Activated CD8-positive, alpha-beta memory T cell treated with anti-CD3 and anti-CD28 coated beads, Interleukin-2, amount 10 ng/mL, durations not matched to agents 7 days and 5 days (primary cell): ENCODE measurements at regions of chr1 and their contacts with region 1.

Region 1: GRCh38 chr1:26500488-26501175 is 28.4 kb downstream of the HMGN2 start:
- DNase-seq: peak; percentile 93
- ATAC-seq: peak; percentile 77
- H3K4me3 Mint-ChIP-seq: peak overlapping the region; percentile 80
- H3K27ac Mint-ChIP-seq: peak overlapping the region; percentile 95
- H3K4me1 Mint-ChIP-seq: peaks cover 17% of the 10 kb centered on the region
- H3K27me3 Mint-ChIP-seq: no peaks in the 10 kb centered on the region

Region 2: GRCh38 chr1:26472901-26473845 is 27.5 kb before region 1 on chr1:
- CTCF ChIA-PET with region 1: interaction called, 35 read pairs
- DNase-seq: peak; percentile 97
- ATAC-seq: peak; percentile 74
- H3K4me3 Mint-ChIP-seq: peak overlapping the region; percentile 86
- H3K27ac Mint-ChIP-seq: peak overlapping the region; percentile 61
- H3K4me1 Mint-ChIP-seq: peaks cover 45% of the 10 kb centered on the region
- H3K27me3 Mint-ChIP-seq: no peaks in the 10 kb centered on the region

Region 3: DNA sequence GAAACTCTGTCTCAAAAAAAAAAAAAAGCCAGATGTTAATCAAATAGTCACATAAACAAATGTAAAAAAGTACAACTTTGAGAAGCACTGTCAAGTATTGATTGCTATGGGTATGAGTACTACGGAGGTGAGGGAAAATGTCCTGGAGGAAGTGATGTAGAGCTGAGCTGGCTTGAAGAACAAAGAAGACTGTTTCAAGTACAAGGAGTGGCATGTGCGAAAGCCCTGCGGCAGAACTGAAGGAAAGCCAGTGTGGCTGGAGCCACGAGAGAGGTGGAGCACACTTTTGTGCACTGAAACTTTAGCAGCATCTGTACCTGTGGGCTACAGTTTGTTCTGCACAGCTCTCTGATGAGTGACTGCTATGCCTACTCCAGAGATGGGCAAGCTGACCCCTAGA is 23.5 kb after region 1 on chr1:
- CTCF ChIA-PET with region 1: interaction called, 14 read pairs
- DNase-seq: no peak
- ATAC-seq: no peak
- H3K4me3 Mint-ChIP-seq: no peak overlapping the region
- H3K27ac Mint-ChIP-seq: no peak overlapping the region
- H3K4me1 Mint-ChIP-seq: peaks cover 4% of the 10 kb centered on the region
- H3K27me3 Mint-ChIP-seq: peaks cover 29% of the 10 kb centered on the region

Region 4: GRCh38 chr1:26541816-26542711 is 41.4 kb after region 1 on chr1:
- CTCF ChIA-PET with region 1: interaction called, 82 read pairs
- DNase-seq: peak; percentile 95
- ATAC-seq: peak; percentile 73
- H3K4me3 Mint-ChIP-seq: peak overlapping the region; percentile 73
- H3K27ac Mint-ChIP-seq: peak overlapping the region; percentile 97
- H3K4me1 Mint-ChIP-seq: peaks cover 85% of the 10 kb centered on the region
- H3K27me3 Mint-ChIP-seq: no peaks in the 10 kb centered on the region

Region 5: GRCh38 chr1:26555550-26556510 is 55.2 kb after region 1 on chr1:
- CTCF ChIA-PET with region 1: interaction called, 15 read pairs
- DNase-seq: no peak
- ATAC-seq: no peak
- H3K4me3 Mint-ChIP-seq: no peak overlapping the region
- H3K27ac Mint-ChIP-seq: no peak overlapping the region
- H3K4me1 Mint-ChIP-seq: peaks cover 29% of the 10 kb centered on the region
- H3K27me3 Mint-ChIP-seq: no peaks in the 10 kb centered on the region

Region 6: GRCh38 chr1:26754086-26754874 is 253.6 kb after region 1 on chr1:
- CTCF ChIA-PET with region 1: no interaction called
- DNase-seq: no peak
- ATAC-seq: no peak
- H3K4me3 Mint-ChIP-seq: no peak overlapping the region
- H3K27ac Mint-ChIP-seq: no peak overlapping the region
- H3K4me1 Mint-ChIP-seq: peaks cover 32% of the 10 kb centered on the region
- H3K27me3 Mint-ChIP-seq: no peaks in the 10 kb centered on the region

Region 7: DNA sequence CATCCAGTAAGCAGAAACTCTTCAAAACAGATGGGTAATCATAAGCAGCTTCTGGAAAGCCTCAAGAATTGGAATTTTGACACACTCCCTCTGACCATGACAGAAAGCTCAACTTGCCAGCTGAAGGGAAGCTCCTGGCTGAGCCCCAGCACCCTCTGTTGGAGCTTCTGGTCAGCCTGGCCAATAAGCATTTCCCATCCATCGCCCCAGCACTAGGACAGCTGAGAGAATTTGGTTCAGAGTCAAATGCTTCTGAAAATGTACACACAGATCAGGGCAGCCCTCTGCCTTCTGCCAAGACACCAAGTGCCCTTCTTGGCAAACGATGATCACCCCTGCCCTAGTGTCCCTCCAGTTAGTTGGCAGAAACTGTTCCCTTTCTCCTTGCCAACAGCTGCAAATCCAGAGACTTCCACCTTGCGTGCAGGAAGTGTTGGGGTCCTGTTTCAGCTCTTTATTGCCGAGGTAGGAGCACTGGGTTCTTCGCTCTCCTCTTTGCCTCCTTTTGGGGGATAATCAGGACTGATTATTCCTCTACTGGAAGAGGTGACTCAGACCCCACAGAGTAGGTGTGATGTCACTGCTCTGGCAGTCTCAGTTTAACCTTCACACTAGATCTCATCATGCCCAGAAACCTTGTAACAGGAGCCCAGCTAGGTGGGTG is 299.0 kb after region 1 on chr1:
- CTCF ChIA-PET with region 1: interaction called, 12 read pairs
- DNase-seq: peak; percentile 63
- ATAC-seq: peak; percentile 76
- H3K4me3 Mint-ChIP-seq: peak overlapping the region; percentile 56
- H3K27ac Mint-ChIP-seq: peak overlapping the region; percentile 97
- H3K4me1 Mint-ChIP-seq: peaks cover 47% of the 10 kb centered on the region
- H3K27me3 Mint-ChIP-seq: no peaks in the 10 kb centered on the region